CD8-positive, alpha-beta T cell (primary cell): ENCODE measurements at regions of chr7 and their contacts with region 1.

Region 1: DNA sequence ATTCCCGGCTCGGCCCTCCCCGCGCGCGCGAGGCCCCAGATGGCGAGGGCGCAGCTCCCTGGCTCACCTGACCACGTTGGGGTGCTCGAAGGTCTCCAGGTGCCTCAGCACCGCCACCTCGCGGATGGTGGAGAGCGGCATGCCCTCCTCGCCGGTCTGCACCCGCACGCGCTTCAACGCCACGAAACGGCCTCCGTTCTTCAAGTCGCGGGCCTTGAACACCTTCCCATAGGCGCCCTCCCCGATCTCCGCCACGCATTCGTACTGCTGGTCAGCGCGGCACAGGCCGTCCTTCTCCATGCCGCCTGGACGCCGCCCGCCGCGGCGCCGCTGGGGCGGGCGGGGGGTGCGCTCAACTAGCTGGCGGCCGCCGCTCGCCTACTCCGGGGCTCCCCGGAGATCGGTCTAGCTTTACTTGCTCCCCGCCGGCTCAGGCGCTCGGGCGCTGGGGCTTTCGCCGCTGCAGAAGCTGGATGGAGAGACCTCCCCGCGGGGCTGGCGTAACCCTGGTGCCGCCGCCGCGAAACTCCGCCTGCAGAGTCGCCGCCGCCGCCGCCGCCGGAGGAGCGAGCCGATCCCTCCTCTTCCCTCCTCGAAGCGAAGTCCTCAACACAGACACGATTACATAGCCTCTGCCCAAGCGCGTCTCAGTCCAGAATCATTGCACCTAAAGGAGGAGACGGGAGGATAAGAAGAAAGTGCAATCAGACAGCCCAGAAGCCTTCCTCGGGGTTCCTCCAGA is 3.2 kb downstream of the CDK6 start:
- DNase-seq: peak; percentile 78 to 93 (median 88)
- ATAC-seq: peak; percentile 71
- H3K4me3 ChIP-seq: peak overlapping the region; percentile 85 to 96
- H3K4me3 Mint-ChIP-seq: peak overlapping the region; percentile 98
- H3K27ac ChIP-seq: peak overlapping the region; percentile 46 to 68
- H3K27ac Mint-ChIP-seq: peak overlapping the region; percentile 92
- H3K4me1 ChIP-seq: peaks cover 39% of the 10 kb centered on the region
- H3K4me1 Mint-ChIP-seq: peaks cover 60% of the 10 kb centered on the region
- H3K27me3 ChIP-seq: peaks cover 0 to 3% of the 10 kb centered on the region in 2 experiments
- H3K27me3 Mint-ChIP-seq: peaks cover 4% of the 10 kb centered on the region
- CTCF ChIP-seq: peak; percentile 81

Region 2: DNA sequence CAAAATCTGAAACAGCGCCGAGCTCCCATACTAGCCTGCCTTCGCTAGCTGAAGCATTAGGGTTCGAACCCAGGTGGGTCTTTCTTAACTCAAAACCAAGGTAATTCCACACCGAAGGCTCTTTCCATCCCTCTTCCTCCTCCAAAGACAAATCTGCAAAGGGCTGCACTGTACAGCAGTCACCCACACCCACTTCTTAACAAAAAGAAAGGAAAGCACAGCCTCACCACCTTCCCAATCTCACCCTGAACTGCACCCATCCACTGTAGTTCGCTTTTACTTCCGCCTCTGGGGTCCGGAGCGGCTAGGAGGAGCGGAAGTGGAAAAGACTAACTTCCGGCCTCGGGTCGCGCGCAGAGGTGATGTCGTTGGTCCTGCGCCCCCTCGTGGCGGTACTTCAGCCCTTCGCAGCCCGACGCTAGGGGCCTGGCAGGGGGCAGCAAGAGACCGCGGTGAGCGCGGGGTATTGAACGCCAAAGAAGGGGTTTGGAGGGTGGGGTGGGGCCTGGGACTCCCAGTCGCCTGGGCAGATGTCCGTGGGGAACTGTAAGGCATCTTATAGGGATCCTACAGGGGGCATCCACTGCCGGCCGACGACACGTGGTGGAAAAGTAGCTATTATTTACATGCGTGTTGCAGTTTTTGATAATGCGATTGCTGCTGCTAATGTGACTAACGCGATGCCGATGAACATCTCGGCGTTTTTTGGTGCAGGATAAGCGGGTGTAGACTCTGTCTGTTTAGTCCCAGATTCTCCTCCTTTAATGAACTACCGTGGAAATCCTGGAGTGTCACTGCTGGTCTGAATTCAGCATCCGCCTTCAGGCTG is 952.6 kb before region 1 on chr7 and contains the start of gene MTERF1:
- CTCF ChIA-PET with region 1: no interaction called
- POLR2A ChIA-PET with region 1: no interaction called
- intact Hi-C with region 1: loop called in 1 of 2 experiments (anchors 5 kb)
- DNase-seq: peak; percentile 82 to 96 (median 95)
- ATAC-seq: peak; percentile 96
- H3K4me3 ChIP-seq: peak within 1 kb of the TSS; percentile 78 to 90
- H3K4me3 Mint-ChIP-seq: peak within 1 kb of the TSS; percentile 94
- H3K27ac ChIP-seq: peak within 1 kb of the TSS; percentile 63 to 77
- H3K27ac Mint-ChIP-seq: peak within 1 kb of the TSS; percentile 97
- H3K4me1 ChIP-seq: peaks cover 21% of the 10 kb centered on the region
- H3K4me1 Mint-ChIP-seq: peaks cover 40% of the 10 kb centered on the region
- H3K27me3 ChIP-seq: no peaks in the 10 kb centered on the region
- H3K27me3 Mint-ChIP-seq: no peaks in the 10 kb centered on the region
- CTCF ChIP-seq: peak; percentile 97
- total RNA-seq, gene MTERF1: 12.3 to 12.5 TPM

Region 3: DNA sequence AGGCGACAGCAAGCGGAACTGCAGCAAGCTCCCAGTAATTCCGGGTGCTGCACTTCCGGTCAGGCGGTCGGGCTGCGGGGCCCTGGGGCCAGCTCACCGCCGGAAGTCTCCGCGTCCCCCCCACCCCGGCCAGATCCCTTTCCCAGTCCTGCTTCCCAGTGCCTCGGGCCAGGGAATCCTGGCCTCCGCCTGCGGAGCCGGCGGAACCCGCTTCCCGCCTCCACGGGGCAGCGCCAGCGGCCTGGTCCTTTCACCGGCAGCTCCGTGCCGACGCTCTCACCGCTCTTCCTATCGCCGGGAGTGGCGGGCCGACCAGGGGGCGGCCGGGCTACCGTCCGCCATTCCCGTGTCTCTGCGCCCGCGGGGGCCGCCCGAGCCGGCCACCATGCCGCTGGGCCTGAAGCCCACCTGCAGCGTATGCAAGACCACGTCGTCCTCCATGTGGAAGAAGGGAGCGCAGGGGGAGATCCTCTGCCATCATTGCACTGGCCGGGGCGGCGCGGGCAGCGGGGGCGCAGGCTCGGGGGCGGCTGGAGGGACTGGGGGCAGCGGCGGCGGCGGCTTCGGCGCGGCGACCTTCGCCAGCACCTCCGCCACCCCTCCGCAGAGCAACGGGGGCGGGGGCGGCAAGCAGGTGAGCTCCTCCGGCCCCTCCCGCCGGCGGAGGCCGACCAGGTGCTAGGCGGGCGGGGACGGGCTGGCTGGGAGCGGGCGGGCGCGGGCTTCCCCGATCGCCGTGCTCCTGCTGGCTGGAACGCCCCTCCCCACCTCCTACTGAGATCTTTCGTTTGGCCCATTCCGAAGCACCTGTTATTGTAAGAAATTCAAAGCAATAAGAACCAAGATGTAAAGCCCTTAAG is 385.6 kb before region 1 on chr7 and contains the start of gene GATAD1:
- CTCF ChIA-PET with region 1: no interaction called
- POLR2A ChIA-PET with region 1: no interaction called
- intact Hi-C with region 1: loop called in 1 of 2 experiments (anchors 10 kb)
- DNase-seq: peak; percentile 55 to 91 (median 79)
- ATAC-seq: peak; percentile 78
- H3K4me3 ChIP-seq: peak within 1 kb of the TSS; percentile 73 to 79
- H3K4me3 Mint-ChIP-seq: peak within 1 kb of the TSS; percentile 91
- H3K27ac ChIP-seq: peak within 1 kb of the TSS; percentile 92 to 97
- H3K27ac Mint-ChIP-seq: peak within 1 kb of the TSS; percentile 99
- H3K4me1 ChIP-seq: peaks cover 17% of the 10 kb centered on the region
- H3K4me1 Mint-ChIP-seq: peaks cover 16% of the 10 kb centered on the region
- H3K27me3 ChIP-seq: no peaks in the 10 kb centered on the region
- H3K27me3 Mint-ChIP-seq: no peaks in the 10 kb centered on the region
- CTCF ChIP-seq: peak; percentile 90
- total RNA-seq, gene GATAD1: 10.3 to 10.5 TPM

Region 4: GRCh38 chr7:92590711-92591310 is 242.4 kb before region 1 on chr7:
- CTCF ChIA-PET with region 1: interaction called, 3 read pairs
- POLR2A ChIA-PET with region 1: interaction called, 4 read pairs
- intact Hi-C with region 1: loop called in 1 of 2 experiments (anchors 1 kb)
- DNase-seq: peak in 1 of 9 experiments; percentile 11
- ATAC-seq: no peak
- H3K4me3 ChIP-seq: peak overlapping the region; percentile 71 to 74
- H3K4me3 Mint-ChIP-seq: peak overlapping the region; percentile 96
- H3K27ac ChIP-seq: no peak overlapping the region
- H3K27ac Mint-ChIP-seq: no peak overlapping the region
- H3K4me1 ChIP-seq: peaks cover 32% of the 10 kb centered on the region
- H3K4me1 Mint-ChIP-seq: peaks cover 46% of the 10 kb centered on the region
- H3K27me3 ChIP-seq: no peaks in the 10 kb centered on the region
- H3K27me3 Mint-ChIP-seq: no peaks in the 10 kb centered on the region
- CTCF ChIP-seq: no peak

Region 5: GRCh38 chr7:92717993-92718716 is 115.0 kb before region 1 on chr7:
- CTCF ChIA-PET with region 1: interaction called, 5 read pairs
- POLR2A ChIA-PET with region 1: no interaction called
- intact Hi-C with region 1: loop called in 1 of 2 experiments (anchors 5 kb)
- DNase-seq: peak in 8 of 9 experiments; percentile 17 to 76 (median 44)
- ATAC-seq: peak; percentile 94
- H3K4me3 ChIP-seq: peak overlapping the region; percentile 41 to 56
- H3K4me3 Mint-ChIP-seq: peak overlapping the region; percentile 92
- H3K27ac ChIP-seq: peak overlapping the region; percentile 42 to 64
- H3K27ac Mint-ChIP-seq: peak overlapping the region; percentile 95
- H3K4me1 ChIP-seq: peaks cover 20% of the 10 kb centered on the region
- H3K4me1 Mint-ChIP-seq: peaks cover 29% of the 10 kb centered on the region
- H3K27me3 ChIP-seq: no peaks in the 10 kb centered on the region
- H3K27me3 Mint-ChIP-seq: no peaks in the 10 kb centered on the region
- CTCF ChIP-seq: no peak

Region 6: GRCh38 chr7:92904292-92905131 is 71.3 kb after region 1 on chr7:
- CTCF ChIA-PET with region 1: interaction called, 3 read pairs
- POLR2A ChIA-PET with region 1: no interaction called
- intact Hi-C with region 1: loop called in 1 of 2 experiments (anchors 1 kb)
- DNase-seq: peak; percentile 18 to 86 (median 78)
- ATAC-seq: peak; percentile 99
- H3K4me3 ChIP-seq: no peak overlapping the region
- H3K4me3 Mint-ChIP-seq: no peak overlapping the region
- H3K27ac ChIP-seq: peak overlapping the region in 1 of 2 experiments; percentile 3
- H3K27ac Mint-ChIP-seq: no peak overlapping the region
- H3K4me1 ChIP-seq: peaks cover 6% of the 10 kb centered on the region
- H3K4me1 Mint-ChIP-seq: peaks cover 13% of the 10 kb centered on the region
- H3K27me3 ChIP-seq: no peaks in the 10 kb centered on the region
- H3K27me3 Mint-ChIP-seq: no peaks in the 10 kb centered on the region
- CTCF ChIP-seq: no peak

Region 7: DNA sequence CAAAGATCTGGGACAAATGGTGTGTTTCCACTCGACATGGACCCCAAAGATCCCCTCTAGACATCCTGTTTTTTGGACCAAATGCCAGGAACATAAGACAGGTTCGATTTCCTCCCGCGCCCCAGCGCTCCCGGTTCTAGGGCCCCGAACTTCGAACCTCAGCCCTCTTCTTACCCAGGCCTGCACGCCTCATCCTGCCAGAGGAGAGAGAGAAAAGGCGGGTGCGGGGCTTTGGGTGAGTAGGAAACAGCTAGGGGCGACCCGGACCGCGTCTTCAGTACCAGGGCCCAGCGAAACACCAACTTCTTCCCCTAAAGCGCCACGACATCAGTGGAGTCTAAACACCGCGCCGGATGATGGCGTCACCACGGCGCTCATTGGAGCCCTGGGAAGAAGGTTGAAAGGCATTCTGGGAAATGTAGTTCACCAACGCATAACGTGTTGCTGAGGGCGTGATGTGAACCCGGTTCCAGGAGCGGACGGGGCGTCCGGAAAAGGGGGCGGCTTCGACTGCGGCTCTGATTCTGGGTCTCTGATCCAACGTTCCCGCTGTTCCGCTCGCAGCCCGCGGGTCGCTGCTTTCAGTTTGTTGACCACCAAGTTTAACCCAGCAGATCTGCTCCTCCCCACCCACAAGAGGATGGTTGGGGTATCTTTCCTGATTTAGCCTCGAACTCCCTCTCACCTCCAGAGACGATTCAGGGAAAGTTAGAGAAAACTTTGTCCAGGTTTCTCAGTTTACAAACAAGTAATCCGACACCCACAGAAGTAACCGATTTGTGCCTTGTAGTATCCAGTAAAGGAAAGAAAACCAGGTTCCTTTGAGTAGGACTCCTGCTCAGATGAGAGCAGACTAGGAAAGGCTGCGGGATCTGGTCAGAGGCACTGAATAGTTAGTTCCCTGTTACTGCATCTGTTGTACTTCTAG is 1171.1 kb after region 1 on chr7 and contains the start of gene BET1:
- CTCF ChIA-PET with region 1: no interaction called
- POLR2A ChIA-PET with region 1: no interaction called
- intact Hi-C with region 1: loop called (anchors 5 to 10 kb)
- DNase-seq: peak; percentile 84 to 98 (median 93)
- ATAC-seq: peak; percentile 93
- H3K4me3 ChIP-seq: peak within 1 kb of the TSS; percentile 84 to 91
- H3K4me3 Mint-ChIP-seq: peak within 1 kb of the TSS; percentile 99
- H3K27ac ChIP-seq: peak within 1 kb of the TSS; percentile 90
- H3K27ac Mint-ChIP-seq: peak within 1 kb of the TSS; percentile 99
- H3K4me1 ChIP-seq: peaks cover 11% of the 10 kb centered on the region
- H3K4me1 Mint-ChIP-seq: peaks cover 40% of the 10 kb centered on the region
- H3K27me3 ChIP-seq: no peaks in the 10 kb centered on the region
- H3K27me3 Mint-ChIP-seq: peaks cover 4% of the 10 kb centered on the region
- CTCF ChIP-seq: no peak
- total RNA-seq, gene BET1: 6.2 TPM